ENCODE measurements at regions of chr10 and their contacts with region 1.

Region 1: DNA sequence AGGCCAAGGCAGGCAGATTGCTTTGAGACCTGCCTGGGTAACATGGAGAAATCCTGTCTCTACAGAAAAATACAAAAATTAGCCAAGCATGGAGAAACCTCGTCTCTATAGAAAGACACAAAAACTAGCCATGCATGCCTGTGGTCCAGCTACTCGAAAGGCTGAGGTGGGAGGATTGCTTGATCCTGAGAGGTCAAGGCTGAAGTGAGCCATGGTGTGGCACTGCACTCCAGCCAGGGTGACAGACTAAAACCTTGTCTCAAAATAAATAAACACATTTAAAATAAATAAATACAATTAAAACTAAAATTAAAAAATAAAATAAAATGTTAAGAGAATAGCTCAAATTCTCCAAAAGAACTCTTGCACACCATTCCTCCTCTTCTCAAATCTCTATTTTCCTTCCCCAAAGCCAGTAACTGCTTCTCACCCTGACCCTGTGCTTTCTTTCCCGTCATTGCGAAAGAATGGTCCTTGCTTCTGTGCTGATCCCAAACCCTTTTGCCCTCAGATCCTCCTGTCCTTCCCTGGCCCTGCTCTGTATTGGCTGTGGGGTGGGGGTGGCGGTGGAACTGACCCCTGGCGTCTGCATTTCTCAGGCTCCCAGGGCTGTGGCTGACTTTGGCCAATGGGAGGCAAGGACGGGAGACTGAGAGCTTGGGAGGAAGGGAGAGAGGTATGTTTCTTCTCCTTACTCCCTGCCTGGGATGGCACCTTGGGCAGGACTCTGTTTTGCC is 12.4 kb downstream of the SRGN start:
- DNase-seq: no peak
- H3K4me3 ChIP-seq: no peak overlapping the region
- H3K27ac ChIP-seq: no peak overlapping the region
- H3K27me3 ChIP-seq: no peaks in the 10 kb centered on the region
- CTCF ChIP-seq: no peak

Region 2: DNA sequence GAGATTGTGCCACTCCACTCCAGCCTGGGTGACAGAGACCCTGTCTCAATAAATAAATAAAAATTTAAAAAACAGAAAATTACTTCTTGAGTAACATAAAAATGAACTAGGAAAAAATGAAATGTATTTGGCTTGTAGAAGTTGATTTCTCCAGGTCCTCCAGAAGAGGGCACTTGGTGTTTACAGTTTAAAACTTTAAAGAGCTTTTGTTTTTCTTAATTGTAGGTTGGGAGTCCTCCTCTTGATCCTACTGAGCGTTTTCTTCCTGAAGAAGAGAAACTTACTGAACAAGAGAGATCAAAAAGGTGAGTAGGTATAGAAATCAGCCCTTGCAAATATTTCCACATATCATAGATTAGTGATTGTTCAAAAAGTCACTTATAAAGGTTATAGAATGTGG is 95.5 kb before region 1 on chr10:
- CTCF ChIA-PET with region 1: interaction called, 138 read pairs
- POLR2A ChIA-PET with region 1: no interaction called
- DNase-seq: peak; percentile 24
- H3K4me3 ChIP-seq: no peak overlapping the region
- H3K27ac ChIP-seq: no peak overlapping the region
- H3K27me3 ChIP-seq: no peaks in the 10 kb centered on the region
- CTCF ChIP-seq: peak; percentile 63

Region 3: DNA sequence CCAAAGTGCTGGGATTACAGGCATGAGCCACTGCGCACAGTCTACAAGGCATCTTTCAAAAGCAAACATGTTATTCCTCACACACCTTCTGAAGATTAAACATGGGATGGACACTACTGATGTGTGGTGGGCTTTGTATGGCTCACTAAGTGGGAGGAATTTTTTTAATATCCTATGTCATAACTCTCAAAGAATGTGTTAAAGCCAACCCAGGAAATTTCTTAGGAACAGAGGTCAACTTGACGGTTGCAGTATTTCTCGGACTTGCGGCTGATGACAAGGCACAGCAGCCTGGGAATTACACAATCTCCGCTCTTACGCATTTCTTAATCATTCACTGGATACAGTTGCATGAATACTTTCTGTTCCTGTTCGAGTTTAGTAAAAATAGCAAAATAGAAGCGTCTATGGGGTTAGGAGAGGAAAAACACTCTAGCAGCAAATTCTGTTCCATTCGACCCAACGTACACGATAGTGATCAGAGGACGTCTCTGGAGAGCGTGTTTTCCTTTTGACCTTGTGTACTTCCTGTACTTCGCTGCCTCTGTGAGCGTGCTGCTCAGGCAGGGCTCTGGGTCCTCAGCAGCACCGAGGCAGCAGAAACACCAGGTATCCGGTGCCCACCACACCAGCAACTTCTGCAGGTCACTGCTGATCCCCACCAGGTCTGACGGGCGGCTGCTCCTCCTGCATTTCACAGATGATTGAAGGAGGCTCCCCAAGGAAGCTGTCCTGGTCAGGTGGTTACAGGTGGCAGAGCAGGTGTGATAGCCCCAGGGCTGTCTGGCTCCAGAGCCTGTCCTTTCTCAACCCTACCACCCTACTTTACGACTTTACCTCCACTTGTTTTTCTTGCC is 38.8 kb before region 1 on chr10:
- CTCF ChIA-PET with region 1: no interaction called
- POLR2A ChIA-PET with region 1: no interaction called
- DNase-seq: peak; percentile 97
- H3K4me3 ChIP-seq: peak overlapping the region; percentile 54
- H3K27ac ChIP-seq: peak overlapping the region; percentile 100
- H3K27me3 ChIP-seq: no peaks in the 10 kb centered on the region
- CTCF ChIP-seq: no peak

Region 4: DNA sequence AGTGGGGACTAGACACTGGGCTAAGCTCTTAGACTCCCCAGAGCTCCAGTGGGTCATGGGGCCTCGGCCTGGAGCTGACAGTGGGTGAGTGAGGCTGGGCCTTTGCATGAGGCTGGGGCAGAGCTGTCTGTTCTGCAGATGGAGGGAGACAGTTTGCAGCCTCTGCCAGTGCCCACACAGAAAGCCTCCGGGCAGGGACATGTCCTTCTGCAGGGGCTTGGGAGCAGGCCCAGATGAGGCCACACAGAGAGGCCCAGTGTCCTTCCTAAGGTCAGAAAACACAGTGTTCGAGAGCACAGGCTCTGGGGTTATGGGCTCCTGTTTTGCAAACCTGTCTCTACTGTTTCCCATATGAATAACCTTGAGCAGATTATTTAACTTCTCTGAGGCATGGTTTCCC is 152.9 kb after region 1 on chr10:
- CTCF ChIA-PET with region 1: no interaction called
- POLR2A ChIA-PET with region 1: no interaction called
- DNase-seq: no peak
- H3K4me3 ChIP-seq: no peak overlapping the region
- H3K27ac ChIP-seq: no peak overlapping the region
- H3K27me3 ChIP-seq: peaks cover 7% of the 10 kb centered on the region
- CTCF ChIP-seq: no peak